ENCODE measurements at regions of chr3 and their contacts with region 1.

Region 1: DNA sequence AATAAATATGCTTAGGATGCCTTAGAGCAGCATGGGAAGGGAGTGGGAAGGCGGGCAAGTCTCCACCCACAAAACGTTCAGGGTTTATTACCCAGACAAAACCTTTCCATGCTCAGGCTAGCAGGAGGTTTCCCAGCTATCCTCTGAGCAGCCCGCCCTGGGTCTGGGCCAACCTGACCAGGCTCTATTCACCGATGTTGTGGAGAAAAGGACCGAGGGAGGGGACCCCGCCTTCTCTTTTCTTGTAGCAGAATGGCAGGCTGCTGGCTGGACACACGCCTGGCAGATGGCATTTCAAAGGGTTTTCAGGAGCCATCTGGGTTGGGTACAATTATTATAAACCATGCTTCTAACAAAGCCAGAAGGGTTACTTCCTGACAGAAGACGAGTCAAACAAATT is 540.9 kb downstream of the MAGI1 start:
- DNase-seq: no peak
- ATAC-seq: no peak
- H3K4me3 ChIP-seq: no peak overlapping the region
- H3K27ac ChIP-seq: no peak overlapping the region
- H3K4me1 ChIP-seq: no peaks in the 10 kb centered on the region
- H3K27me3 ChIP-seq: no peaks in the 10 kb centered on the region
- CTCF ChIP-seq: no peak
- POLR2A ChIP-seq: no peak
- RAD21 ChIP-seq: no peak

Region 2: GRCh38 chr3:65551945-65552344 is 54.1 kb after region 1 on chr3:
- CTCF ChIA-PET with region 1: no interaction called
- POLR2A ChIA-PET with region 1: no interaction called
- RAD21 ChIA-PET with region 1: no interaction called
- intact Hi-C with region 1: loop called (anchors 10 kb)
- DNase-seq: no peak
- ATAC-seq: no peak
- H3K4me3 ChIP-seq: no peak overlapping the region
- H3K27ac ChIP-seq: no peak overlapping the region
- H3K4me1 ChIP-seq: no peaks in the 10 kb centered on the region
- H3K27me3 ChIP-seq: no peaks in the 10 kb centered on the region
- CTCF ChIP-seq: no peak
- POLR2A ChIP-seq: no peak
- RAD21 ChIP-seq: no peak

Region 3: GRCh38 chr3:66029443-66029842 is 531.6 kb after region 1 on chr3:
- CTCF ChIA-PET with region 1: no interaction called
- POLR2A ChIA-PET with region 1: no interaction called
- RAD21 ChIA-PET with region 1: no interaction called
- intact Hi-C with region 1: no loop called
- DNase-seq: no peak
- ATAC-seq: peak; percentile 54
- H3K4me3 ChIP-seq: no peak overlapping the region
- H3K27ac ChIP-seq: no peak overlapping the region
- H3K4me1 ChIP-seq: peaks cover 6 to 17% of the 10 kb centered on the region in 2 experiments; a peak in 3 of 4 replicates
- H3K27me3 ChIP-seq: no peaks in the 10 kb centered on the region
- CTCF ChIP-seq: no peak
- POLR2A ChIP-seq: no peak
- RAD21 ChIP-seq: no peak

Region 4: GRCh38 chr3:66224220-66224619 is 726.4 kb after region 1 on chr3:
- CTCF ChIA-PET with region 1: no interaction called
- POLR2A ChIA-PET with region 1: no interaction called
- RAD21 ChIA-PET with region 1: no interaction called
- intact Hi-C with region 1: no loop called
- DNase-seq: no peak
- ATAC-seq: no peak
- H3K4me3 ChIP-seq: no peak overlapping the region
- H3K27ac ChIP-seq: no peak overlapping the region
- H3K4me1 ChIP-seq: peaks cover 4 to 12% of the 10 kb centered on the region in 2 experiments; a peak in 3 of 4 replicates
- H3K27me3 ChIP-seq: no peaks in the 10 kb centered on the region
- CTCF ChIP-seq: no peak
- POLR2A ChIP-seq: no peak
- RAD21 ChIP-seq: no peak

Measured in HCT116 (cell line).